Endothelial cell of umbilical vein (primary cell): ENCODE measurements at regions of chr14 and their contacts with region 1.

Region 1: DNA sequence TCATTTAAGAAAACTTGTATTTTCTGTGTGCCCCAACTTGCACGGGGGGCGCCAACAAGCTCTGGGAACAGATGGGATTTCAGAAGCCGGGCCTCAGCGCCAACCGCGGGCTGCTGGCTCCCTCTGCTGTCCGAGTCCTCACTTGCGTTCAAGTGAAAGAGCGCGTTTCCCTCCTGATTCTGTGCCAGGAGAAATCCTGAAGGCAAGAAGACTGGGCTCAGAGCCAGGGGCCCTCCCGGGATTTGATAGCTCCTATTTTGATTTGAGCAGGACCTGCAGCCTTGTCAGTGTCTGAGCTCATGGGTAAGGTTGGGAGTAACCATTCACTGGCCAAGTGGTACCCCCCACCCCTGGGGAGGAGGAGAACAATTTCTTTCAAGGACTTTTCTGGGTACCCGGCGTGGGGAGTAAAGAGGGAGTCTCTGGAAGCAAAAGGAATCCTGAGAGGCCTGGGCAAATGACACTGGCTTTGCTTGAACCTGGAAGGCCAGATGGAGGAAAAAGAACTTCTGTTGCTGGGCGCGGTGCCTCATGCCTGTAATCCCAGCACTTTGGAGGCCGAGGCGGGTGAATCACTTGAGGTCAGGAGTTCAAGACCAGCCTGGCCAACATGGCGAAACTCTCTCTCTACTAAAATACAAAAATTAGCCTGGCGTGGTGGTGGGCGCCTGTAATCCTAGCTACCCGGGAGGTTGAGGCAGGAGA is 179.0 kb upstream of the RGS6 start:
- DNase-seq: peak; percentile 89
- H3K4me3 ChIP-seq: no peak overlapping the region
- H3K27ac ChIP-seq: no peak overlapping the region
- H3K4me1 ChIP-seq: peaks cover 6% of the 10 kb centered on the region
- H3K27me3 ChIP-seq: no peaks in the 10 kb centered on the region
- CTCF ChIP-seq: peak; percentile 91 to 92
- POLR2A ChIP-seq: no peak

Region 2: GRCh38 chr14:71050204-71050823 is 703.0 kb before region 1 on chr14:
- CTCF ChIA-PET with region 1: interaction called, 23 read pairs
- POLR2A ChIA-PET with region 1: no interaction called
- dilution Hi-C with region 1: no loop called
- intact Hi-C with region 1: loop called (anchors 2 kb)
- DNase-seq: peak; percentile 28
- H3K4me3 ChIP-seq: no peak overlapping the region
- H3K27ac ChIP-seq: no peak overlapping the region
- H3K4me1 ChIP-seq: no peaks in the 10 kb centered on the region
- H3K27me3 ChIP-seq: no peaks in the 10 kb centered on the region
- CTCF ChIP-seq: peak in 1 of 2 donors; percentile 17
- POLR2A ChIP-seq: no peak

Region 3: GRCh38 chr14:71138448-71139293 is 614.6 kb before region 1 on chr14:
- CTCF ChIA-PET with region 1: interaction called, 74 read pairs
- POLR2A ChIA-PET with region 1: no interaction called
- dilution Hi-C with region 1: no loop called
- intact Hi-C with region 1: loop called (anchors 1 kb)
- DNase-seq: peak; percentile 46
- H3K4me3 ChIP-seq: no peak overlapping the region
- H3K27ac ChIP-seq: no peak overlapping the region
- H3K4me1 ChIP-seq: peaks cover 15% of the 10 kb centered on the region
- H3K27me3 ChIP-seq: no peaks in the 10 kb centered on the region
- CTCF ChIP-seq: peak; percentile 85 to 90
- POLR2A ChIP-seq: no peak

Region 4: DNA sequence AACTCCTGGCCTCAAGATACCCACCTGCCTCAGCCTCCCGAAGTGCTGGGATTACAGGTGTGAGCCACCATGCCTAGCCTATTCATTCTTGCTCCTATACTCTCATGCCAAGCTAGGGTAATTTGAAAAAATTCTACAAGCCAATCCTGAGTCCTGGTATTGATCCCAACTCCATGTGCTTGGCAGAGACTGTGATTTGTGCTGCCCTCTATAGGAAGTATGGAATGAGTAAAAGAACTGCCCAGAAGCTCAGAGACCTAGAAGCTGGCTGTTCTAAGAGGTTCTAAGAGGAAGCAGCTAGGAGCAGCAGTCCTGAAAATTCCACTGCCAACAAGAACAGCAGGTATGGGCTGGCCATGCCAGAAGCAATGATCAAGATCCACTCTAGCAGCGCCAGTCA is 443.5 kb before region 1 on chr14:
- CTCF ChIA-PET with region 1: interaction called, 11 read pairs
- POLR2A ChIA-PET with region 1: no interaction called
- dilution Hi-C with region 1: no loop called
- intact Hi-C with region 1: no loop called
- DNase-seq: no peak
- H3K4me3 ChIP-seq: no peak overlapping the region
- H3K27ac ChIP-seq: no peak overlapping the region
- H3K4me1 ChIP-seq: no peaks in the 10 kb centered on the region
- H3K27me3 ChIP-seq: peaks cover 6 to 14% of the 10 kb centered on the region in 2 experiments
- CTCF ChIP-seq: no peak
- POLR2A ChIP-seq: no peak

Region 5: GRCh38 chr14:71733210-71733883 is 19.9 kb before region 1 on chr14:
- CTCF ChIA-PET with region 1: interaction called, 11 read pairs
- POLR2A ChIA-PET with region 1: no interaction called
- dilution Hi-C with region 1: no loop called
- intact Hi-C with region 1: no loop called
- DNase-seq: no peak
- H3K4me3 ChIP-seq: no peak overlapping the region
- H3K27ac ChIP-seq: no peak overlapping the region
- H3K4me1 ChIP-seq: no peaks in the 10 kb centered on the region
- H3K27me3 ChIP-seq: no peaks in the 10 kb centered on the region
- CTCF ChIP-seq: no peak
- POLR2A ChIP-seq: no peak

Region 6: GRCh38 chr14:71776471-71777360 is 23.4 kb after region 1 on chr14:
- CTCF ChIA-PET with region 1: interaction called, 7 read pairs
- POLR2A ChIA-PET with region 1: no interaction called
- dilution Hi-C with region 1: no loop called
- intact Hi-C with region 1: loop called (anchors 1 kb)
- DNase-seq: peak; percentile 64
- H3K4me3 ChIP-seq: no peak overlapping the region
- H3K27ac ChIP-seq: no peak overlapping the region
- H3K4me1 ChIP-seq: peaks cover 20% of the 10 kb centered on the region
- H3K27me3 ChIP-seq: peaks cover 0 to 2% of the 10 kb centered on the region in 2 experiments
- CTCF ChIP-seq: no peak
- POLR2A ChIP-seq: no peak

Region 7: GRCh38 chr14:72164420-72165228 is 411.3 kb after region 1 on chr14:
- CTCF ChIA-PET with region 1: no interaction called
- POLR2A ChIA-PET with region 1: no interaction called
- dilution Hi-C with region 1: no loop called
- intact Hi-C with region 1: no loop called
- DNase-seq: no peak
- H3K4me3 ChIP-seq: no peak overlapping the region
- H3K27ac ChIP-seq: no peak overlapping the region
- H3K4me1 ChIP-seq: no peaks in the 10 kb centered on the region
- H3K27me3 ChIP-seq: no peaks in the 10 kb centered on the region
- CTCF ChIP-seq: no peak
- POLR2A ChIP-seq: no peak